ENCODE measurements at regions of chr5 and their contacts with region 1.

Region 1: GRCh38 chr5:134176511-134177368 is at the start of gene SKP1:
- DNase-seq: peak; percentile 82 to 92 (median 87)
- ATAC-seq: peak; percentile 51 to 92 (median 88)
- H3K4me3 ChIP-seq: peak within 1 kb of the TSS; percentile 70 to 99 (median 96)
- H3K27ac ChIP-seq: peak within 1 kb of the TSS; percentile 95 to 100 (median 100)
- H3K4me1 ChIP-seq: peaks cover 3 to 46% (median 22%) of the 10 kb centered on the region in 12 donors
- H3K27me3 ChIP-seq: no peaks in the 10 kb centered on the region
- CTCF ChIP-seq: peak in 1 of 12 donors; percentile 14
- POLR2A ChIP-seq: peak; percentile 51 to 95
- total RNA-seq, gene SKP1: 290 to 533 (median 459) TPM

Region 2: GRCh38 chr5:134225618-134226440 is 49.1 kb after region 1 on chr5 and contains the start of gene PPP2CA:
- intact Hi-C with region 1: loop called in 6 of 10 experiments (anchors 2 to 5 kb)
- DNase-seq: peak; percentile 98 to 100 (median 99)
- ATAC-seq: peak; percentile 92 to 97 (median 96)
- H3K4me3 ChIP-seq: peak within 1 kb of the TSS; percentile 64 to 100 (median 94)
- H3K27ac ChIP-seq: peak within 1 kb of the TSS; percentile 98 to 100 (median 99)
- H3K4me1 ChIP-seq: peaks cover 4 to 69% (median 49%) of the 10 kb centered on the region in 12 donors
- H3K27me3 ChIP-seq: no peaks in the 10 kb centered on the region
- CTCF ChIP-seq: peak in 2 of 12 donors; percentile 7 to 9
- POLR2A ChIP-seq: peak; percentile 54 to 75
- total RNA-seq, gene PPP2CA: 143 to 219 (median 180) TPM

Measured in heart left ventricle (tissue), 16 donors.